ENCODE measurements at regions of chr2 and their contacts with region 1.

Region 1: GRCh38 chr2:74864846-74865722 is 31.2 kb downstream of the HK2 start:
- DNase-seq: no peak
- ATAC-seq: no peak
- H3K4me3 ChIP-seq: no peak overlapping the region
- H3K4me3 Mint-ChIP-seq: no peak overlapping the region
- H3K27ac ChIP-seq: no peak overlapping the region
- H3K27ac Mint-ChIP-seq: no peak overlapping the region
- H3K4me1 ChIP-seq: no peaks in the 10 kb centered on the region
- H3K4me1 Mint-ChIP-seq: no peaks in the 10 kb centered on the region
- H3K27me3 ChIP-seq: no peaks in the 10 kb centered on the region
- H3K27me3 Mint-ChIP-seq: no peaks in the 10 kb centered on the region
- CTCF ChIP-seq: no peak

Region 2: DNA sequence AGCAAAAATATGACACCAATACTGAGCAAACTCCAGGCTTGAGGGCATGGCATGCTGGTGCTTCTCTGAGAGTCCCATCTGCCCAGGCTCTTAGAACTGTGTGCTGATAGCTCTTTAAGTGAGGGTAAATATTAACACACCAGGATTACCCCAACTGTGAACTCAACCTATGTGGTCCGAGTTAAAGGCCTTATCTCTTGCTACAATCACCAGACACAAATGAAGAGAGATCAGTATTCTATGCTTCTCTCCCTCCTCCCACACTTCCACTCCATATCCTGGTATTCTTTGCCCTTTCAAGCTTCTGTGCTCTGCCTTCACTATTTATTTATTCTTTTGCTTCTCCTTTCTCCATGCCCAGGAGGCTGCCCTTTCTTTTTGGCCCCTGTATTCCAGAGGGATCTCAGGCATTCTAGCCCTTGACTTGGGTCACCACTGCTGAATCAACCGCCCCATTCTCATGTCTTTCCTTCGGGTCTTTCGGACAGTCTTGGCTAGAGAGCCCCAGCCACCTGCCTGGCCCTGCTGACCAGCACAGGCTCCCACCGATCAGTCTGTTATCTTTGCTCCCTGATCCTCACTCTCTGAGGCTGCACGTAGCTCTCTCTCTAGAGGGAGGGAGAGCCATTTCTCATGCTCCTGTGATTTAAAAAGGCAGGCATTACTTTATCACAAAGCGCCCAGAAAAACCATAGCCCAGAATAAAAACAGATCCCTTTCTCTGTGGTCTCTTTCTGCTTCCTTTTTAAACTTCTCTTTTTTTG is 48.4 kb before region 1 on chr2:
- CTCF ChIA-PET with region 1: no interaction called
- POLR2A ChIA-PET with region 1: no interaction called
- intact Hi-C with region 1: loop called in 1 of 2 experiments (anchors 10 kb)
- DNase-seq: no peak
- ATAC-seq: no peak
- H3K4me3 ChIP-seq: no peak overlapping the region
- H3K4me3 Mint-ChIP-seq: no peak overlapping the region
- H3K27ac ChIP-seq: no peak overlapping the region
- H3K27ac Mint-ChIP-seq: no peak overlapping the region
- H3K4me1 ChIP-seq: no peaks in the 10 kb centered on the region
- H3K4me1 Mint-ChIP-seq: peaks cover 8% of the 10 kb centered on the region
- H3K27me3 ChIP-seq: no peaks in the 10 kb centered on the region
- H3K27me3 Mint-ChIP-seq: peaks cover 14% of the 10 kb centered on the region
- CTCF ChIP-seq: no peak

Measured in CD8-positive, alpha-beta T cell (primary cell).